ENCODE measurements at regions of chr1 and their contacts with region 1.

Region 1: DNA sequence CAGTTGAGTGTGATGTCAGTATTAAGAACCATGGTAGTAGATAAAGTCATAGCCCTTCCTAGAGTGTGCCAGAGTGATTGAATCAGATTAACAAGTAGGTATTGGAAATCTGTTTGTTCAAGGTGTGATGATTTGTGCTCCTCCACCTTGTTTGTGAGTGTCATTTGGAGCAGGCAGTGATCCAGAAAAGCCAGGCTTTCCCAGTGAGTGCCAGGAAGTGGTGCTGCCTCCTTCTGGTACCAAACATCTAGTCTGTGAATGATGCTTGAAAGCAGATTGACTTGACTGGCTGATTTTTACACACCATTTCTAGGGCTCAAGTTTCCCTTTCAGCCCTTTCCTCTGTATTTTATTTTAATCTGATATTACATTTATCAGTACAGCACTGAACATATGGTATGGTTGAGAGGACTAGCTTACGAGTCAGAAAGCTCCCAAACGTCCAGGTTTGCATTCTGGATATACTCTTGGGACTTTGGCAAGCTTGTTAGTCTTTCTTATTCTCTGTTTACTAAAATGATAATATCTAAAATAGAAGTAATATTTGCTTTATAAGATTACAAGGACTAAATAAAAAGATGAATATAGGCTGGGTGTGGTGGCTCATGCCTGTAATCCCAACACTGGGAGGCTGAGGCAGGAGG is 100.7 kb downstream of the PATJ start:
- DNase-seq: peak; percentile 21
- H3K4me3 ChIP-seq: no peak overlapping the region
- H3K27ac ChIP-seq: no peak overlapping the region
- H3K4me1 ChIP-seq: peaks cover 24% of the 10 kb centered on the region
- H3K27me3 ChIP-seq: no peaks in the 10 kb centered on the region

Region 2: DNA sequence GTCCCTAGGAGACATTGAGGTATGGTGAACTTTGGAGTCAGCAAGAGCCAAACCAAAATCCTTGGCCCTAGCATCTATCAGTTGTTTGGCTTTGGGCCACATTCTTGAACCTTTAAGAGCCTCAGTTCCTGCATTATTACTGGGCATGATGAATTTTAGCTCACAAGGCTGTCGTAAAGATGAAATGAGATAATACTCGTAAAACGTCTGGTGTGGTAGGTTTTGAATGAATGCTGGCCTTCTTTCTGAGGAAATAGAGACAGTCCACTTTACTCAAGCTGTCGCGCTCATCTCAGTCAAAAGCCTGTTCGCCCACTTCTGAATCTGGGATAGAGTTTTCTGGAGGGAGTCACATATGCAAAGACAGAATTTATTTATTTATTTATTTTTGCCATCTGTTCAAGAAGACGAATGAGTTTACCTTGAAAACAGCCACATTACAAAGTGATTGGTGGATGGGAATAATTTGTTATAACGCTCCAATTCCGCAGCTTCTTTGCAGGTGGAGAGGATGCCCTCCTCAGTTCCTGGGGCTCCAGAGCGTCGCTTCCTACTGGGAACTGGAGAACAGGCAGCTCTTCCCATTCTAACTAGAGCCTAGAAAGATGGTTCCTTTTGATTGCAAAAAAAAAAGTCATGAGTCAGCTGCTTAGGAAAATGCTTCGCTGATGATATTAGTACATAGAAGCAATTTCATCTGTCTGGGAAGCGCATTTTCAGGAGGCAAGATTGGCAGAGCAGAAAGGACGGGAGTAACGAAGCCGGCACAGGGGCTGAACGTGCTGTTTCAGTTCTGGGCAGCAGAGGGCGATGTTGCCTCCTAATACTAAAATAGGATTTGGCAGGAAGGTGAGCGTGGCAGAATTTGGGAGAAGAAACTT is 1866.6 kb before region 1 on chr1:
- in situ Hi-C with region 1: loop called (anchors 25 kb)
- DNase-seq: peak; percentile 71
- H3K4me3 ChIP-seq: 0 out of 2 replicates have a peak overlapping the region, but pooled peaks have one; percentile 30
- H3K27ac ChIP-seq: no peak overlapping the region
- H3K4me1 ChIP-seq: no peaks in the 10 kb centered on the region
- H3K27me3 ChIP-seq: peaks cover 25% of the 10 kb centered on the region

Region 3: DNA sequence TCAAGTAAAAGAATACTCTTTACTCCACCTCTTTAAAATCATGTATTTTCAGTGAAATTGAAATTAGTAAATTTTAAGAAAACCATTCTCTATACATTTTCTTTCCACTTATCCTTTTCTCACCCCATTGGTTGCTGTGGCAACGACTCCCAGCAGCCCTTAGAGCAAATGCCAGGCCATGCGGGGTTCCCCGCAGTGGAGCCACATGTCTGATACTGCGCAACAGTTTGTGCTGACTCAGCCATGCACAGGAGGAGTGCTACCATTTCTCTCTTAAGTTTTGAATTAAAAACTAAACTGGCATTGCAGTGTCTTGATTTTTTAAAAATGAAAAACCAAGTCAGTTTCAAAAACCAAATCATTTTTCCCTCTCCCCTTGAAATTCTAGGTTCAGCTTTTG is 137.6 kb after region 1 on chr1:
- in situ Hi-C with region 1: no loop called
- DNase-seq: no peak
- H3K4me3 ChIP-seq: no peak overlapping the region
- H3K27ac ChIP-seq: no peak overlapping the region
- H3K4me1 ChIP-seq: no peaks in the 10 kb centered on the region
- H3K27me3 ChIP-seq: no peaks in the 10 kb centered on the region

Region 4: GRCh38 chr1:62941780-62942179 is 1098.8 kb after region 1 on chr1:
- in situ Hi-C with region 1: no loop called
- DNase-seq: peak; percentile 5
- H3K4me3 ChIP-seq: no peak overlapping the region
- H3K27ac ChIP-seq: no peak overlapping the region
- H3K4me1 ChIP-seq: no peaks in the 10 kb centered on the region
- H3K27me3 ChIP-seq: peaks cover 5% of the 10 kb centered on the region; the same call in 1 of the 2 replicates